Heart left ventricle (tissue), 16 donors: ENCODE measurements at regions of chr3 and their contacts with region 1.

Region 1: GRCh38 chr3:149969940-149970715 is 567 bp downstream of the PFN2 start:
- DNase-seq: peak; percentile 80 to 88 (median 82)
- ATAC-seq: peak in 3 of 4 donors; percentile 70 to 77 (median 76)
- H3K4me3 ChIP-seq: peak overlapping the region; percentile 62 to 93 (median 82)
- H3K27ac ChIP-seq: peak overlapping the region; percentile 73 to 97 (median 90)
- H3K4me1 ChIP-seq: peaks cover 0 to 47% (median 13%) of the 10 kb centered on the region in 12 donors
- H3K27me3 ChIP-seq: peaks cover 0 to 16% (median 0%) of the 10 kb centered on the region in 9 donors
- CTCF ChIP-seq: no peak
- POLR2A ChIP-seq: no peak

Region 2: GRCh38 chr3:150062492-150062891 is 92.4 kb after region 1 on chr3:
- intact Hi-C with region 1: loop called in 1 of 10 experiments (anchors 5 kb)
- DNase-seq: no peak
- ATAC-seq: peak; percentile 41 to 79 (median 62)
- H3K4me3 ChIP-seq: peak overlapping the region in 5 of 12 donors; percentile 1 to 40 (median 29)
- H3K27ac ChIP-seq: peak overlapping the region in 9 of 12 donors; percentile 8 to 65 (median 55)
- H3K4me1 ChIP-seq: peaks cover 0 to 21% (median 4%) of the 10 kb centered on the region in 12 donors
- H3K27me3 ChIP-seq: no peaks in the 10 kb centered on the region
- CTCF ChIP-seq: no peak
- POLR2A ChIP-seq: no peak

Region 3: GRCh38 chr3:150090006-150090405 is 119.9 kb after region 1 on chr3:
- intact Hi-C with region 1: no loop called
- DNase-seq: no peak
- ATAC-seq: no peak
- H3K4me3 ChIP-seq: no peak overlapping the region
- H3K27ac ChIP-seq: no peak overlapping the region
- H3K4me1 ChIP-seq: no peaks in the 10 kb centered on the region
- H3K27me3 ChIP-seq: no peaks in the 10 kb centered on the region
- CTCF ChIP-seq: no peak
- POLR2A ChIP-seq: no peak

Region 4: DNA sequence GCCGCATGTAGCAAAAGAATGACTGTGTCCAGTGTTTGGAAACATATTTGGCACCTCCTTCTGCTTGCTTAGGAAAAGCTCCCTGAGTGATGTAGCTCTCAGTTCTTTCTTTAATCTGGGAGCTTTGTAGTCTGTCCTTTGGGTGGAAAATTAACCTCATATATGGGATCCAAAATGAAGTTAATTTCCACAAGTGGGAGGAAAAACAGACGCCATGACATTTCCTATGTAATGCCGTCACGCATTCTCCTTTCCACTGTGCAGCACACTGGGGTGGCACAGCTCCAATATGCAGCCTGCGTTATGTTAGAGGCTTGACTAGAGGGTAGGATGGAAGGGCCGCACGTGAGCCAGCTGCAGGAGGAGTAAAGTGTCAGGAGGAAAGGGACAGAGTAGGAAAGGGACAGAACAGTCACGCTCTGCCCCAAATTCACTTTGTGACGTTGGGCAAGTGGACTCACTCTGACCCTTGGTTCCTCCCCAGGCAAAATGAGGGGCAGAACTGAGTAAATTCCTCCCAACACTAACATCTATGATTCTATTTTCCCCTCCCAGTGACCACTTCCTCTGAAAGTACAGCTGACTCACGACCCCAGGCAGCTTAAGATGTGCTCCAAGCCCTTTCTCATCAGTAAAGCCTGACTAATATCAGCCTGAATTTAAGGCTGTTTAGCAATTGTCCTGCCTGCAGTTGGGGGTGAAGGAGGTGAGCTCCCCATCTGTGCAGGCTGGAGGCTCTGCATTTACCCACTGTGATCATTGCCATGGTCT is 177.0 kb after region 1 on chr3:
- intact Hi-C with region 1: no loop called
- DNase-seq: peak in 1 of 5 donors; percentile 34
- ATAC-seq: peak in 3 of 4 donors; percentile 19 to 54 (median 37)
- H3K4me3 ChIP-seq: no peak overlapping the region
- H3K27ac ChIP-seq: peak overlapping the region in 2 of 12 donors; percentile 55 to 68
- H3K4me1 ChIP-seq: peaks cover 0 to 17% (median 2%) of the 10 kb centered on the region in 12 donors
- H3K27me3 ChIP-seq: no peaks in the 10 kb centered on the region
- CTCF ChIP-seq: no peak
- POLR2A ChIP-seq: no peak

Region 5: GRCh38 chr3:150168698-150169097 is 198.6 kb after region 1 on chr3:
- intact Hi-C with region 1: loop called in 1 of 10 experiments (anchors 5 kb)
- DNase-seq: peak in 4 of 5 donors; percentile 70 to 78 (median 72)
- ATAC-seq: peak; percentile 93 to 94 (median 94)
- H3K4me3 ChIP-seq: no peak overlapping the region
- H3K27ac ChIP-seq: peak overlapping the region; percentile 41 to 88 (median 66)
- H3K4me1 ChIP-seq: peaks cover 0 to 26% (median 6%) of the 10 kb centered on the region in 12 donors
- H3K27me3 ChIP-seq: no peaks in the 10 kb centered on the region
- CTCF ChIP-seq: no peak
- POLR2A ChIP-seq: no peak

Region 6: DNA sequence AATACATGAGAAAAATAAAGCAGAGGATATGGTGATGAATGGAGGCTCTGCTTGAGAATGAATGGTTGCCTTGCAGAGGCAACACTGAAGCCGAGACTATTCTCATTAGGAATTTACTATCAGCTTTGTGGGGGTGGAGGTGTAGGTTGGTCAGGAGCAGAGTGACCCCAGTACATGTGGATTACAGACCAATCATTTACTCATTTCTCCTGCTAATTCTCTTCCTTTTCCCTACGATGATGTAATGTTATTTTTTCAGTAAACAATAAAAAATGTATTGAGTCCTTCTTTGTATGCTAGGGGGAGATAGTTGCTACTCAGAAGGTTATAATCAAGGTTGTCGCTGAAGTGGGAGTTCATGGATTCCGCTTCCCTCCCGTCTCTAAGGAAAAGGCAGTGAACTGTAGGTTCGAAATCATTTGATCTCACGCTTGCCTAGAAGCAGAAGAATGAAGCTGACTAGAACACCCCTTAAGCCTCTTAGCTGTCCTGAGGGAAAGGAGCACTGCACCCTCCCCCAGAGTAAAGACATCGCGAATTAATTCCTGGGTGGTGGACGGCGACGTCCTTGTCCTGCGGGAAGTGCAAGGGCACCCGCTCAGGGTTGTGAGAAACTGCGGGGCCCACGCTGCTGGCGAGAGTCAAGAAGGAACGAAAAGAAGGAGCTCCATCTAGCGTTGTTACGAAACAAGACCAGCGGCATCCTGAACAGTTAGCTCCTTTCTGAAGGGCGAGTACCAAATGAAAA is 213.7 kb after region 1 on chr3:
- intact Hi-C with region 1: loop called (anchors 1 to 2 kb)
- DNase-seq: peak; percentile 56 to 80 (median 67)
- ATAC-seq: peak; percentile 90 to 97 (median 95)
- H3K4me3 ChIP-seq: peak overlapping the region in 10 of 12 donors; percentile 29 to 52 (median 43)
- H3K27ac ChIP-seq: peak overlapping the region in 3 of 12 donors; percentile 8 to 43 (median 41)
- H3K4me1 ChIP-seq: peaks cover 0 to 14% (median 6%) of the 10 kb centered on the region in 12 donors
- H3K27me3 ChIP-seq: no peaks in the 10 kb centered on the region
- CTCF ChIP-seq: peak; percentile 50 to 84 (median 74)
- POLR2A ChIP-seq: no peak

Region 7: DNA sequence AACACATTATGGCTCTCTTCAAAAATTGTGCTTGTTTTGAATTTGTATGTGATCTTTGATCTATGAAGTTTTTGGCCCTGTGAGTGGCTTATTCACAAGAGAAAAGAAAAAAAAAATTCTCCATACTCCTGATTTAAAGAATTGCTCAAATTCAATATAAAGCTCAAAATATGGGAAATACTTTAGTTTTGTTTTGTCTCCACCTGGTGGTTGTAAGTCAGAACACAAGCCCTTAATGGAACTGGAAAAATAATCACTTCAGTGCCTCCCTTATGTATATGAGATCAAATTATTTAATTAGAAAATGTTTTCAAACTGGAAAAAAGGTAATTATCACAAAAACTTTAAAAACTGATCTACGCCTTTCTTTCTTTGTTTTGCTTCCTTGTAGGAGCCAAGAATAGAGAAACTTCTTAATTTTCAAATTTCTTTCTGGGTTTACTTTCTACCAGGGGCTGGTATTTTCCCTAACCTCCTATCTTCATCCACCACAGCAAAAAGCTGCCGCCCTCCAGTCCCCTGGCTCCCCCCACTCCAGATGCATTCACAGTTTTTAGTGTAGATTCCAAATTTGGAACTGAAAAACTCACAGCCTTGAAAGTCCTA is 525.5 kb after region 1 on chr3:
- intact Hi-C with region 1: loop called in 6 of 10 experiments (anchors 5 to 10 kb)
- DNase-seq: no peak
- ATAC-seq: peak in 2 of 4 donors; percentile 41 to 52
- H3K4me3 ChIP-seq: no peak overlapping the region
- H3K27ac ChIP-seq: no peak overlapping the region
- H3K4me1 ChIP-seq: peaks cover 0 to 5% (median 0%) of the 10 kb centered on the region in 12 donors
- H3K27me3 ChIP-seq: no peaks in the 10 kb centered on the region
- CTCF ChIP-seq: peak; percentile 70 to 87 (median 84)
- POLR2A ChIP-seq: no peak